Activated B cell treated with CpG ODN at 0.5 μM for 24 hours (primary cell): ENCODE measurements at regions of chr13 and their contacts with region 1.

Region 1: GRCh38 chr13:101514788-101515187 is 62.3 kb downstream of the ITGBL1 start:
- DNase-seq: no peak
- ATAC-seq: no peak
- H3K4me3 Mint-ChIP-seq: no peak overlapping the region
- H3K27ac Mint-ChIP-seq: no peak overlapping the region
- H3K4me1 Mint-ChIP-seq: no peaks in the 10 kb centered on the region
- H3K27me3 Mint-ChIP-seq: no peaks in the 10 kb centered on the region
- CTCF ChIP-seq: no peak

Region 2: GRCh38 chr13:99709134-99709533 is 1805.7 kb before region 1 on chr13:
- CTCF ChIA-PET with region 1: no interaction called
- POLR2A ChIA-PET with region 1: no interaction called
- intact Hi-C with region 1: no loop called
- DNase-seq: no peak
- ATAC-seq: no peak
- H3K4me3 Mint-ChIP-seq: no peak overlapping the region
- H3K27ac Mint-ChIP-seq: no peak overlapping the region
- H3K4me1 Mint-ChIP-seq: no peaks in the 10 kb centered on the region
- H3K27me3 Mint-ChIP-seq: no peaks in the 10 kb centered on the region
- CTCF ChIP-seq: no peak

Region 3: DNA sequence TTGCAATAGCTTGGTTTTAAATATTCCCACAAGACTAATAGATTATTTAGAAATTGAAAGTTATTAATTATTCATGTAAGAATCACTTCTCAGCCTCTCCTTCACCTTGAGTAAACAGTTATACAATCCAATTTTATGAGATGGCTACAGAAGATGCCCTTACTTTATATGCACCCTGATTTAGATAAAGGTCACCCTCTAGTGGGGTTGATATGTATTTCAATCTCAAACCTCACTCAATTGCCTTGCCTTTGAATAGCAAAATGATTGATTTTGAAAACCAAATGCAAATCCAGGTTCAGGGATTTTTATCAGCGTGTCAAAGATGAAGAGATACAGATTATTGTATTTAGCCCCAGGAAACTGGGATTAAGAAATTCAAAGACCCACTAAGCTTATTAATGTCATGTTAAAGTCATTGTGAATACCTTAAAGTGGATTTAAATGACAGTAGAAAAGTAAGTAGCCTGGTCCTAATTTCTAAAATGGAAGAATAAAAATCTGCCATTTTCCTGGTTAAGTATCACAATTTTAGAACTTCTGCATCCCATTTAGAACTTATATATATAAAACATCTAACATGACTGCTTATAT is 242.8 kb after region 1 on chr13:
- CTCF ChIA-PET with region 1: interaction called, 8 read pairs
- POLR2A ChIA-PET with region 1: no interaction called
- intact Hi-C with region 1: loop called (anchors 1 kb)
- DNase-seq: no peak
- ATAC-seq: no peak
- H3K4me3 Mint-ChIP-seq: no peak overlapping the region
- H3K27ac Mint-ChIP-seq: no peak overlapping the region
- H3K4me1 Mint-ChIP-seq: no peaks in the 10 kb centered on the region
- H3K27me3 Mint-ChIP-seq: no peaks in the 10 kb centered on the region
- CTCF ChIP-seq: no peak

Region 4: GRCh38 chr13:101942038-101942437 is 427.2 kb after region 1 on chr13:
- CTCF ChIA-PET with region 1: no interaction called
- POLR2A ChIA-PET with region 1: no interaction called
- intact Hi-C with region 1: loop called (anchors 10 kb)
- DNase-seq: no peak
- ATAC-seq: no peak
- H3K4me3 Mint-ChIP-seq: no peak overlapping the region
- H3K27ac Mint-ChIP-seq: no peak overlapping the region
- H3K4me1 Mint-ChIP-seq: no peaks in the 10 kb centered on the region
- H3K27me3 Mint-ChIP-seq: peaks cover 3% of the 10 kb centered on the region
- CTCF ChIP-seq: no peak

Region 5: GRCh38 chr13:102555917-102556553 is 1041.2 kb after region 1 on chr13:
- CTCF ChIA-PET with region 1: interaction called, 4 read pairs
- POLR2A ChIA-PET with region 1: no interaction called
- intact Hi-C with region 1: loop called (anchors 1 kb)
- DNase-seq: no peak
- ATAC-seq: no peak
- H3K4me3 Mint-ChIP-seq: no peak overlapping the region
- H3K27ac Mint-ChIP-seq: no peak overlapping the region
- H3K4me1 Mint-ChIP-seq: no peaks in the 10 kb centered on the region
- H3K27me3 Mint-ChIP-seq: peaks cover 6% of the 10 kb centered on the region
- CTCF ChIP-seq: no peak